Heart left ventricle (tissue), 16 donors: ENCODE measurements at regions of chr19 and their contacts with region 1.

Region 1: GRCh38 chr19:33998739-33999345 is 173.5 kb upstream of the LSM14A start:
- DNase-seq: no peak
- ATAC-seq: no peak
- H3K4me3 ChIP-seq: no peak overlapping the region
- H3K27ac ChIP-seq: no peak overlapping the region
- H3K4me1 ChIP-seq: no peaks in the 10 kb centered on the region
- H3K27me3 ChIP-seq: peaks cover 0 to 13% (median 2%) of the 10 kb centered on the region in 9 donors
- CTCF ChIP-seq: peak; percentile 27 to 67 (median 52)
- POLR2A ChIP-seq: no peak

Region 2: DNA sequence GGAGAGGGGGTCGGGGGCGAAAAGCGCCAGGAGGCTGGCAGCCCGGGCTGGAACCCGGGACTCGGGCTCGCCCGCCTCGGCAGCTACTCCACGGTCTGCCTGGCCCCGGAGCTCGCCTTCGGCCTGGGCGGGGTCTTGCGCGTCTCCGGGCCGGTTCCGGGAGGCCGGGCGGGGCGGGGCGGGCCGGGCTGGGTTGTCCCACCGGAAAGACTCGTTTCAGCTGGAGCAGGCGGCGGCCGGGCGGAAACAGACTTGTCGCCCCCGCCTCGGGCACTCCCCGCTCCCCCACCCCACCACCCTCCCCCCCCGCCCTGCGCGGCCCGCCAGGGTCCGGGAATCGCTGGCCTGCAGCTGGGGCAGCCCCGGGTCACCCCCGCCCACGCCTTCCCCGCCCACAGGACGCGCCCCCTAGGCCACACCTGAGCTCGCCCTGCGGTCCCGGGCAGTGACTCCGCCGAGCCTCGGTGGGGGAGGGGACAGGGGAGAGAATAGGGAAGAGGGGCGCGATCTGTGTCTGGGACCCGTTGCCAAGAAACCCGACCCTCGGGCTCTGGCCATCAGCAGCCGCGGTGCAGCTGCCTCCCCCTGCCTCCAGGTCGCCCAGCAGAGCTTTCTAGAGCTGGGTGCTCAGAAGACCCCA is 92.8 kb before region 1 on chr19:
- intact Hi-C with region 1: loop called in 2 of 10 experiments (anchors 5 to 10 kb)
- DNase-seq: peak; percentile 83 to 86 (median 86)
- ATAC-seq: peak; percentile 68 to 94 (median 91)
- H3K4me3 ChIP-seq: peak overlapping the region; percentile 22 to 67 (median 58)
- H3K27ac ChIP-seq: peak overlapping the region; percentile 72 to 95 (median 88)
- H3K4me1 ChIP-seq: peaks cover 0 to 31% (median 13%) of the 10 kb centered on the region in 12 donors
- H3K27me3 ChIP-seq: peaks cover 0 to 42% (median 7%) of the 10 kb centered on the region in 9 donors
- CTCF ChIP-seq: no peak
- POLR2A ChIP-seq: no peak

Region 3: GRCh38 chr19:33914599-33914998 is 84.2 kb before region 1 on chr19:
- intact Hi-C with region 1: loop called in 2 of 10 experiments (anchors 5 to 10 kb)
- DNase-seq: no peak
- ATAC-seq: no peak
- H3K4me3 ChIP-seq: no peak overlapping the region
- H3K27ac ChIP-seq: no peak overlapping the region
- H3K4me1 ChIP-seq: no peaks in the 10 kb centered on the region
- H3K27me3 ChIP-seq: peaks cover 0 to 13% (median 0%) of the 10 kb centered on the region in 9 donors
- CTCF ChIP-seq: no peak
- POLR2A ChIP-seq: no peak